ENCODE measurements at regions of chr11 and their contacts with region 1.

Region 1: GRCh38 chr11:77047007-77047927 is 13.1 kb downstream of the B3GNT6 start:
- DNase-seq: peak in 1 of 3 donors; percentile 85
- ATAC-seq: peak; percentile 86 to 88 (median 86)
- H3K4me3 ChIP-seq: peak overlapping the region; percentile 27 to 45 (median 42)
- H3K27ac ChIP-seq: peak overlapping the region; percentile 12 to 58 (median 38)
- H3K4me1 ChIP-seq: no peaks in the 10 kb centered on the region
- H3K27me3 ChIP-seq: no peaks in the 10 kb centered on the region
- CTCF ChIP-seq: peak; percentile 70 to 78 (median 76)
- POLR2A ChIP-seq: no peak

Region 2: DNA sequence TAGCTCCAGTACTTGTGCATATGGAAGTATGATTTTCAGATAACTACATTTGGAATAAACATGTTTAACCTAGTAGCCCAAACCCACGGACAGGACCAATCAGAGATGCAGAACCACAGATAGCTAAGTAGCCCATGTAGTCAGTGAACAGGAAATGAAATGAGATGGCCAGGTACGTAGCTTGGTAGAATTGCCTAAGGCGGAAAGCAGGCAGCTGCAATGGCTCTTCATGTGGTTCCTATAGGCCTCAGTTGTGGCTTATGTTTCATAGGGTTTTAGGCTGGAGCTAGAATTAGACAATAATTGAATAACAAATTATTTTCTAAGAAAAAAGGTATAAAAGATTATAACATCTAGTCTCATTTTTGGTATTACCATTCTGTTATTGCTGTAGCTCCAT is 99.5 kb before region 1 on chr11:
- intact Hi-C with region 1: no loop called
- DNase-seq: no peak
- ATAC-seq: no peak
- H3K4me3 ChIP-seq: no peak overlapping the region
- H3K27ac ChIP-seq: no peak overlapping the region
- H3K4me1 ChIP-seq: no peaks in the 10 kb centered on the region
- H3K27me3 ChIP-seq: no peaks in the 10 kb centered on the region
- CTCF ChIP-seq: no peak
- POLR2A ChIP-seq: no peak

Region 3: DNA sequence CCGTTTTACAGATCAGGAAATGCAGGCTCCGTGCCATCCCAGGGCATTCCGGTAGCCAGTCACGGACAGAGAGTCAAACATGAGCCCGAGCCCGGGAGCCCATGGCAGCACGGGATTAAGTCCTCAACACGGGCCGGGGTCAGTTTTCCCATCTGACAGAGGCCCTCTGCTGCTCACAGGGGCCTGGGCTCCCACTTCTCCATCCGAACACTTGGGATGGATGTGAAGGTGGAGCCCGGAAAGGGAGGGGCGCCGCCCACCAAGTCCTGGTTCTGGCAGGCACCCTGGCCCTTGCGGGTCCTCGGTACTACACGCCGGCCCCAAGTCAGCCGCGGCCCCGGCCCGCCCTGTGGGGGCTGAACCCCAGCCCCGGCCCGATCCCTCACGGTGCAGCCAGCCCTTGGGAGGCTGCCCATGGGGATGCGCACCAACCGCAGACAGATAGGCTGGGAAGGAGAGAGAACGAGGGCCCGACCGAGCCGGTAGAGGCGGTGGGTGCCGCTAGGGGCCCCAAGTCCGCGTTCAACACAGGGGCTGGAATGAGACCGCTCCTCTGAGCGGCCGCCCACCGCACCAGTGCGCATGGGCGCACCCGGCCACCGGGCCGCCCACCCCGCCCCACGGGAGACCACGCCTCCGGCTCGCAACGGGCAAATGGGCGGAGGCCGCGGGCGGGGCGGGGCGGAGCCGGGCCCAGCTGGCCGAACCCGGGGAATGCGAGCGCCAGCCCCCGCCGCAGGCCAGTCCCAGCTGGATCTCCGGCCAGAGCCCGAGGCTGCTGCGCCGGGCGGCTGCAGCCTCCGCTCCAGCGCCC is 19.2 kb after region 1 on chr11 and contains the start of gene CAPN5:
- intact Hi-C with region 1: no loop called
- DNase-seq: peak; percentile 95
- ATAC-seq: peak; percentile 86 to 94 (median 90)
- H3K4me3 ChIP-seq: peak within 1 kb of the TSS; percentile 59 to 90 (median 70)
- H3K27ac ChIP-seq: peak within 1 kb of the TSS; percentile 89 to 99 (median 98)
- H3K4me1 ChIP-seq: peaks cover 0 to 45% (median 13%) of the 10 kb centered on the region in 4 donors
- H3K27me3 ChIP-seq: no peaks in the 10 kb centered on the region
- CTCF ChIP-seq: peak; percentile 16 to 34 (median 28)
- POLR2A ChIP-seq: peak; percentile 97
- total RNA-seq, gene CAPN5: 23.1 to 66.7 (median 43.3) TPM

Region 4: GRCh38 chr11:77113382-77114088 is 66.3 kb after region 1 on chr11:
- intact Hi-C with region 1: loop called in 1 of 2 experiments (anchors 10 kb)
- DNase-seq: peak in 2 of 3 donors; percentile 47 to 56
- ATAC-seq: peak; percentile 36 to 59 (median 56)
- H3K4me3 ChIP-seq: no peak overlapping the region
- H3K27ac ChIP-seq: no peak overlapping the region
- H3K4me1 ChIP-seq: no peaks in the 10 kb centered on the region
- H3K27me3 ChIP-seq: no peaks in the 10 kb centered on the region
- CTCF ChIP-seq: peak; percentile 15 to 64 (median 59)
- POLR2A ChIP-seq: no peak